ENCODE measurements at regions of chr15 and their contacts with region 1.

Region 1: DNA sequence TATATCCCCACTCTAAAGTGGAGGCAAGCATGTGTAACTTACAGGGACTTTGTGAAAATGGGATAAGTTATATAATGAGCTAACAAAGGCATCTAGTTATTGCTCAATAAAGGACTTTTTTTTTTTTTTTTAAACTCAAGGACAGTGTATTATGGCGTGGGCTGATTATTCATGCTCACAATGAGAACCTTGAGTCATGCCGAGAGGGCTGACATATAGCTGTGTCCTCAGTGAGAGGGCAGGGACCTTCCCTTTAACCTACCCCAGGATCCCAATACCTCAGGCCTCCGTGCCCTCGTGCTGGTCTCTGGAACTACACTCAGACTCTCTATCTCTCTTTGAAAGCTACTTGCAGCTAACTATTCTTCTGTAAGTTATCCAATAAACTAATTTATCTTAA is 319.9 kb upstream of the ICE2 start:
- DNase-seq: peak; percentile 87
- H3K4me3 Mint-ChIP-seq: peak overlapping the region; percentile 34
- H3K27ac Mint-ChIP-seq: peak overlapping the region; percentile 98
- H3K4me1 Mint-ChIP-seq: peaks cover 83% of the 10 kb centered on the region
- H3K27me3 Mint-ChIP-seq: no peaks in the 10 kb centered on the region

Region 2: DNA sequence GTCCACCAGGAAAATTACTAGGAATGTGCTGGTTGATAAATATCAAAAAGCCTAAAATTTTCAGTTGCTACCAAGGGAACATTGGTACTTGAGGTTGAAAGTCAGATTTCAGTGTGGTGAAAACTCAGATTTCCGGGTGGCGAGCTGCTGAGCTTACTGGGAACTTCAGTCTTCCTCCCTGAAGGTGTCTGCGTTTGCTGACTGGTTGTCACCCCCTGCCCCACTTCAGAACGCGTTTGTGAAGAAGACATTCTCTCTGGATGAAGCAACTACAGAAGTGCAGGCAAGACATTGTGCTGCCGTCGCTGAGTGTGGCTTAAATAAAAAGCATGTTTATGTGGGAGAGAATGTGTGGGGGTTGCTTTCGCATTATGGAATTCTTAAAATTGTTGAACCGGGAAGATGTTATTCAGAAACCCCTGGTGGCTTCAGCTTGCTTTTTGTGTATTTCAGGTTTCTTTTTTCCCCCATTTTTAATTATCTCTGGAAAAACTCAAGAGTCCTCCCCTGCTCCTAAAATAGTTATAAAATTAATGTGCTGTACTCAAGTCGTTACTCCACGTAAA is 1353.8 kb before region 1 on chr15:
- CTCF ChIA-PET with region 1: no interaction called
- intact Hi-C with region 1: no loop called
- DNase-seq: no peak
- H3K4me3 Mint-ChIP-seq: no peak overlapping the region
- H3K27ac Mint-ChIP-seq: no peak overlapping the region
- H3K4me1 Mint-ChIP-seq: no peaks in the 10 kb centered on the region
- H3K27me3 Mint-ChIP-seq: no peaks in the 10 kb centered on the region

Region 3: DNA sequence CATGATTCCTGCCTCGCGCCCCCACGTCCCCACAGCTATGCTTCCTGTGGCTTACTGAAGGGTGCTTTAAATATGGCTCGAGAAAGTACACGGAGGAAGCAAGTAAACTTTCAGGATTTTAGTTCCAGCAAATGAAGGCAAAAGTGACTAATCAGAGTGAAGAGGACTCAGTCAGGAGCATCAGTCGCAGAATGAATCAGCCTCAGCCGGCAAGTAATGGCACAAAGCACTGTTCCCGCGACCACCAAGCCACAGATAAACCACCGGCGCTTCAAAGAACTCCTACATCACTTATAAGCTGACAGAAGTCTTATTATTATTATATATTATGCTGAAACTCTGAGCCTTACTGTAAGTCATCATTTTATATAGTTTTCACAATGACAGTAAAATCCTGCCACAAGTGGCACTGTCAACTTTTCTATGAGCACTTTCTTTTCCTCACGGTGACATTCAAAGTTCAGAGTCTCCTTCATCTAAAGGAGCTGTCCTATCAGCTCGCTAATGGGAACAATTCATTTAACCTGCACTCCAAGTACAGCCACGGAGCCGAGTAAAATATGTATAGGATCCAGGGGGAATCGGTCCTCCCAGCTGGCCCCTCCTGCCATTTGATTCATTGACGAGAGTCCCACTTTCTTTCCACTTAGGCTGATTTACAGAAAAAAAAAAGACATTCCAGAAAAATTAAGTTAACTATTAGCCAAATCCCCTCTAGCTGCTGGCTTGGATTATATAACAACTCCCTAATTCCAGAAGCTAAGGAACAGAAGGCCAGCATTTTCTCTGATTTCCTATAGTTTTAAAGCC is 102.9 kb before region 1 on chr15:
- CTCF ChIA-PET with region 1: interaction called, 3 read pairs
- intact Hi-C with region 1: loop called (anchors 1 kb)
- DNase-seq: peak; percentile 94
- H3K4me3 Mint-ChIP-seq: peak overlapping the region; percentile 20
- H3K27ac Mint-ChIP-seq: peak overlapping the region; percentile 88
- H3K4me1 Mint-ChIP-seq: peaks cover 80% of the 10 kb centered on the region
- H3K27me3 Mint-ChIP-seq: no peaks in the 10 kb centered on the region

Region 4: GRCh38 chr15:60760646-60761504 is 37.9 kb before region 1 on chr15:
- CTCF ChIA-PET with region 1: interaction called, 5 read pairs
- intact Hi-C with region 1: loop called (anchors 1 kb)
- DNase-seq: peak; percentile 46
- H3K4me3 Mint-ChIP-seq: no peak overlapping the region
- H3K27ac Mint-ChIP-seq: peak overlapping the region; percentile 25
- H3K4me1 Mint-ChIP-seq: peaks cover 33% of the 10 kb centered on the region
- H3K27me3 Mint-ChIP-seq: no peaks in the 10 kb centered on the region

Region 5: GRCh38 chr15:60772395-60773120 is 26.3 kb before region 1 on chr15:
- CTCF ChIA-PET with region 1: interaction called, 6 read pairs
- intact Hi-C with region 1: loop called (anchors 1 kb)
- DNase-seq: peak; percentile 32
- H3K4me3 Mint-ChIP-seq: no peak overlapping the region
- H3K27ac Mint-ChIP-seq: peak overlapping the region; percentile 95
- H3K4me1 Mint-ChIP-seq: peaks cover 67% of the 10 kb centered on the region
- H3K27me3 Mint-ChIP-seq: no peaks in the 10 kb centered on the region

Region 6: GRCh38 chr15:60787837-60788691 is 10.8 kb before region 1 on chr15:
- CTCF ChIA-PET with region 1: interaction called, 25 read pairs
- intact Hi-C with region 1: loop called (anchors 1 kb)
- DNase-seq: peak; percentile 70
- H3K4me3 Mint-ChIP-seq: peak overlapping the region; percentile 17
- H3K27ac Mint-ChIP-seq: peak overlapping the region; percentile 72
- H3K4me1 Mint-ChIP-seq: peaks cover 71% of the 10 kb centered on the region
- H3K27me3 Mint-ChIP-seq: no peaks in the 10 kb centered on the region

Region 7: DNA sequence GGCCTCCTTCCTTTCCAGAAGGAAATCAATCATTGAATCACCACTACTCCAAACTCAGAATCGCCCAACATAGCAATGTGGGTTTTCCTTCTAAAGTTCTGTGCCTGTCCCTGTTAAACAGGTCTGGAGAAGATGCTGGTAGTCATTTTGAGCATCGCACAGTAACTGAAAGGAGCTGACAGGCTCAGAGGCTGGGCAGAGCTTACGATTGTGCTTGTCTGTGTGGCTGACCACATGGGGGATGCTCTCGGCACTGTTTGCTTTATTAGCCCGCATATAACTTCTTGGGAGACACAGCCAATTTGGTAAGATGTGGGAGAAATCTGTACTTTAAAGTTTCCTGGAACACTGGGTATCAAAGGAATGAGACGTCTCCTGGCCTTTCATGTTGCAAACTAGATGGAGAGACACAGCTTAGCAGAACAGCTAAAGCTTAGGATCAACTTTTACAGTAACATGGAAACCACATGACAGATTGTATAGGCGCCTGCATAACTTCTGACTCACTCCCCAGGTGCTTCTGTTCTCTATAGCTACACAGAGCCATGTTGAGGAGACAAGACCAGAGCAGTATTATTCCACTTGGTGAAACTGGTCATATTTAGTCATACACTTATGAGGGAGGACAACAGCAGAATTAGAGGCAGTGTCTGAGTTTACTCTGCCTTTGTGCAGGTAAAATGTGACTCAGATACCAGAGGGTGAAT is 56.2 kb after region 1 on chr15:
- CTCF ChIA-PET with region 1: no interaction called
- intact Hi-C with region 1: loop called (anchors 1 kb)
- DNase-seq: peak; percentile 60
- H3K4me3 Mint-ChIP-seq: no peak overlapping the region
- H3K27ac Mint-ChIP-seq: peak overlapping the region; percentile 13
- H3K4me1 Mint-ChIP-seq: peaks cover 64% of the 10 kb centered on the region
- H3K27me3 Mint-ChIP-seq: no peaks in the 10 kb centered on the region